Endothelial cell of umbilical vein (primary cell): ENCODE measurements at regions of chr11 and their contacts with region 1.

Region 1: DNA sequence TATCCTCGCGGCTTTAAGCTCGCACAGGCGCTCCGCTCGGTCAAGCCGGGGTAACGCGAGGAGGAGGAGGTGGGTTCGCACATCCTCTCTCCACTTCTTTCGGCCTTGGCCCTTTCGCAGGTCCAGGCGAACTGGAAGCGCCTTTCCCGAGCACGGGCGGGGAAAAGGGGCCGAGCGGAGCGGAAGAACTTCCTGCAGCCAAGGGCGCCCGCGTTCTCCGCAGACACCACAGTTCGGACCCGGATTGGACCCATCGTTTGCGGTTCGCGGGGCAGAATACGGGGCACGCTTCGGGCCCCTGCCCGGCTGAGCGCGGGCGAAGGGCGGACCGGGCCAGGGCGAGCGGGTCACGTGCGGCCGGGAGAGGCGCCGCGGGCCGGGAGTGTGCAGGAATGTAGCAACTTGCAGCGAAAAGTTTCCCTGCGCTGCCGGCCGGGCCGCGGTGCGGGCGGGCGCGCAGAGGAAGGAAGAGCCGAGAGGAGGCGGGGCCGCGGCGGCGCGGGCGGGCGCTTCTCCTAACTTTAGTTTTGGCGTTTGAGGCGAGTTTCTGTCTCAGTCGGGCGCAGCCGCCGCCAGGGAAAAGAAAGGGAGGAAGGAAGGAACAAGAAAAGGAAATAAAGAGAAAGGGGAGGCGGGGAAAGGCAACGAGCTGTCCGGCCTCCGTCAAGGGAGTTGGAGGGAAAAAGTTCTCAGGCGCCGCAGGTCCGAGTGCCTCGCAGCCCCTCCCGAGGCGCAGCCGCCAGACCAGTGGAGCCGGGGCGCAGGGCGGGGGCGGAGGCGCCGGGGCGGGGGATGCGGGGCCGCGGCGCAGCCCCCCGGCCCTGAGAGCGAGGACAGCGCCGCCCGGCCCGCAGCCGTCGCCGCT is at the start of gene YAP1:
- DNase-seq: peak; percentile 89
- H3K4me3 ChIP-seq: peak within 1 kb of the TSS; percentile 85 to 99 (median 88)
- H3K27ac ChIP-seq: peak within 1 kb of the TSS; percentile 72
- H3K4me1 ChIP-seq: peaks cover 11% of the 10 kb centered on the region
- H3K27me3 ChIP-seq: peaks cover 2 to 18% of the 10 kb centered on the region in 2 experiments
- CTCF ChIP-seq: no peak
- POLR2A ChIP-seq: no peak
- total RNA-seq, gene YAP1: 36.5 and 48.9 TPM in 2 replicates

Region 2: GRCh38 chr11:102268329-102269193 is 158.4 kb after region 1 on chr11:
- CTCF ChIA-PET with region 1: no interaction called
- POLR2A ChIA-PET with region 1: no interaction called
- dilution Hi-C with region 1: no loop called
- intact Hi-C with region 1: loop called (anchors 5 kb)
- DNase-seq: peak; percentile 51
- H3K4me3 ChIP-seq: peak overlapping the region; percentile 5 to 41 (median 7)
- H3K27ac ChIP-seq: no peak overlapping the region
- H3K4me1 ChIP-seq: peaks cover 6% of the 10 kb centered on the region
- H3K27me3 ChIP-seq: peaks cover 11 to 20% of the 10 kb centered on the region in 2 experiments
- CTCF ChIP-seq: peak in 1 of 2 donors; percentile 30
- POLR2A ChIP-seq: no peak